SK-N-SH (cell line): ENCODE measurements at regions of chr1 and their contacts with region 1.

Region 1: DNA sequence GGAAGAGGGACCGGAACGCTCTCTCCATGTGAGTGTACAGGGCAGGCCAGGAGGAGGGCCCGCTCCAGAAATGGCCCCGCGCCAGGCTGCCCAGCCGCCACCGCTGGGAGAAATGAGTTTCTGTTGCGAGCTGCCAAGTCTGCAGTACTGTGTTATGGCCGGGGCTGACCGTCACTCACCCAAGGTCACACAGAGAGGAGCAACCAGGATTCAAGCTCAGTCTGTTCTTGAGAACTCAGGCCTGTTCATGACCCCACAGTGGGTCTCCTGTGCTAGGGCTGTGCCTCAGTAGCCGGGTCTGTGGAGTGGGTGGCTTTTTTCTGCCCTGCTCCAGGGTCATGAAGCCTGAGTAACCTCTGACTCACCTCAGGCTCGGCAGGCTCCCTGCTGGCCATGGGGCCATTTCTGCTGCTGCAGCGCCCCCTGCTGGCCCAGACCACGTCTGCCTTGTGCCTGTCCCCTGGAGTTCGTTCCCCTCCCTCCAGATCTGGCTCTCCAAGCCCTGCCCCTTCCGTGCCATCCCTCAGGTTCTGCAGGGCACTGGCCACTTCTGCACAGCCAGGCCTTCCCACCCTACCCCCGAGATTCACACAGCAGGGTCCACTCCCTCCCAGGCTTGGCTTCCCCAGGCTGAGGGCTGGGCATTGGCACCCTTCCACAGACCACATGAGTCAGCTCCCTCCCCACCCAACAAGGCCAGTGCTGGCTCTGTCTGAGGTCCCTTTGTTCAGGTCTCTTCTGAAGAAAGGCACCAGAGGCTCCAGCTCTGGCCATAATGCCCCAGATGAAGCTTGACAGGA is 51.8 kb downstream of the EDN2 start:
- DNase-seq: peak; percentile 90
- H3K4me3 ChIP-seq: peak overlapping the region; percentile 25 to 58; a peak in 3 of 4 replicates
- H3K27ac ChIP-seq: peak overlapping the region; percentile 85 to 88
- H3K4me1 ChIP-seq: peaks cover 36 to 65% of the 10 kb centered on the region in 2 experiments
- H3K27me3 ChIP-seq: no peaks in the 10 kb centered on the region
- CTCF ChIP-seq: peak; percentile 98
- EP300 ChIP-seq: peak in 1 of 2 experiments; percentile 75; a peak in 1 of 4 replicates
- RAD21 ChIP-seq: peak; percentile 89

Region 2: DNA sequence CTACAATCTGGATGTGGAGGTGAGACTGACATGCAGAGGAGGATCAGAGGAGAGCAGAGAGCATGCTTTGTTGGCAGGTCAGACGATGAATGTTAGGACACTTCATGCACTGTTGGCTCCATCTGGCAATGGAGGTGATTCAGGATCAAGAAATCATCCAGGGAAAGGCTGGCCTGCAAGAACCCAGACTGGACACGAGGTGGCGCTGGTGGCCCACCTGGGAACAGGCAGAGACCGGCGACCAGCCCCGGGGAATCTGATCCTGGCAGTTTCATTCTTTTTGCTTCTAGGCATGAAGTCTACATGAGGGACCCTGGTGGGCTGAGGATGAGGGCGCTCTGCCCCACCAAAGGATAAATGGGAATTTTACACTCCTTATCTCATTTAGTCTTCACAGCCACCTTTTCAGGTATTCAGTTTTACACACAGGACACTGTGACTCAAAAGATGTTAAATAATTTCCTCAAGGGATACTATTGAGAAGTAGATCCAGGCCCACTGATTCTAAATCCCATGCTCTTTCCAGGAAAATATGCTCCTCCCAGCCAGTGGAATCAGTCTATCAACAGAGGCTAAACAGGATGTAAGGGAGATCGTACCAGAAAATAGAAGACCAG is 164.4 kb before region 1 on chr1:
- CTCF ChIA-PET with region 1: interaction called, 25 read pairs
- POLR2A ChIA-PET with region 1: no interaction called
- DNase-seq: peak; percentile 86
- H3K4me3 ChIP-seq: no peak overlapping the region
- H3K27ac ChIP-seq: no peak overlapping the region
- H3K4me1 ChIP-seq: peaks cover 0 to 12% of the 10 kb centered on the region in 2 experiments; a peak in 1 of 4 replicates
- H3K27me3 ChIP-seq: no peaks in the 10 kb centered on the region
- CTCF ChIP-seq: peak; percentile 88
- EP300 ChIP-seq: no peak
- RAD21 ChIP-seq: peak; percentile 99

Region 3: GRCh38 chr1:41322835-41323627 is 109.7 kb before region 1 on chr1:
- CTCF ChIA-PET with region 1: interaction called, 35 read pairs
- POLR2A ChIA-PET with region 1: no interaction called
- DNase-seq: peak; percentile 79
- H3K4me3 ChIP-seq: no peak overlapping the region
- H3K27ac ChIP-seq: no peak overlapping the region
- H3K4me1 ChIP-seq: peaks cover 0 to 17% of the 10 kb centered on the region in 2 experiments; a peak in 1 of 4 replicates
- H3K27me3 ChIP-seq: no peaks in the 10 kb centered on the region
- CTCF ChIP-seq: peak; percentile 60
- EP300 ChIP-seq: no peak
- RAD21 ChIP-seq: peak; percentile 81

Region 4: GRCh38 chr1:41411229-41411628 is 21.5 kb before region 1 on chr1:
- CTCF ChIA-PET with region 1: interaction called, 13 read pairs
- POLR2A ChIA-PET with region 1: no interaction called
- DNase-seq: no peak
- H3K4me3 ChIP-seq: no peak overlapping the region
- H3K27ac ChIP-seq: no peak overlapping the region
- H3K4me1 ChIP-seq: peaks cover 0 to 28% of the 10 kb centered on the region in 2 experiments; a peak in 1 of 4 replicates
- H3K27me3 ChIP-seq: no peaks in the 10 kb centered on the region
- CTCF ChIP-seq: no peak
- EP300 ChIP-seq: no peak
- RAD21 ChIP-seq: no peak

Region 5: GRCh38 chr1:41455479-41456332 is 23.0 kb after region 1 on chr1:
- CTCF ChIA-PET with region 1: interaction called, 64 read pairs
- POLR2A ChIA-PET with region 1: no interaction called
- DNase-seq: peak; percentile 92
- H3K4me3 ChIP-seq: no peak overlapping the region
- H3K27ac ChIP-seq: peak overlapping the region; percentile 76 to 91
- H3K4me1 ChIP-seq: peaks cover 24 to 64% of the 10 kb centered on the region in 2 experiments
- H3K27me3 ChIP-seq: no peaks in the 10 kb centered on the region
- CTCF ChIP-seq: no peak
- EP300 ChIP-seq: peak; percentile 91 to 97
- RAD21 ChIP-seq: no peak; the same call in 1 of the 2 replicates

Region 6: GRCh38 chr1:41504114-41505035 is 71.7 kb after region 1 on chr1:
- CTCF ChIA-PET with region 1: interaction called, 10 read pairs
- POLR2A ChIA-PET with region 1: no interaction called
- DNase-seq: no peak
- H3K4me3 ChIP-seq: no peak overlapping the region
- H3K27ac ChIP-seq: peak overlapping the region; percentile 30 to 98; a peak in 3 of 4 replicates
- H3K4me1 ChIP-seq: peaks cover 9 to 84% of the 10 kb centered on the region in 2 experiments
- H3K27me3 ChIP-seq: no peaks in the 10 kb centered on the region
- CTCF ChIP-seq: no peak
- EP300 ChIP-seq: no peak
- RAD21 ChIP-seq: no peak